Uterus (tissue), 4 donors: ENCODE measurements at regions of chr19 and their contacts with region 1.

Region 1: GRCh38 chr19:6021878-6022569 is 44.1 kb upstream of the RANBP3 start:
- DNase-seq: peak; percentile 74 to 79
- H3K4me3 ChIP-seq: no peak overlapping the region
- H3K27ac ChIP-seq: peak overlapping the region; percentile 36 to 55
- H3K4me1 ChIP-seq: peaks cover 0 to 7% of the 10 kb centered on the region in 2 donors
- H3K27me3 ChIP-seq: no peaks in the 10 kb centered on the region
- CTCF ChIP-seq: peak; percentile 57 to 79 (median 66)
- POLR2A ChIP-seq: no peak

Region 2: DNA sequence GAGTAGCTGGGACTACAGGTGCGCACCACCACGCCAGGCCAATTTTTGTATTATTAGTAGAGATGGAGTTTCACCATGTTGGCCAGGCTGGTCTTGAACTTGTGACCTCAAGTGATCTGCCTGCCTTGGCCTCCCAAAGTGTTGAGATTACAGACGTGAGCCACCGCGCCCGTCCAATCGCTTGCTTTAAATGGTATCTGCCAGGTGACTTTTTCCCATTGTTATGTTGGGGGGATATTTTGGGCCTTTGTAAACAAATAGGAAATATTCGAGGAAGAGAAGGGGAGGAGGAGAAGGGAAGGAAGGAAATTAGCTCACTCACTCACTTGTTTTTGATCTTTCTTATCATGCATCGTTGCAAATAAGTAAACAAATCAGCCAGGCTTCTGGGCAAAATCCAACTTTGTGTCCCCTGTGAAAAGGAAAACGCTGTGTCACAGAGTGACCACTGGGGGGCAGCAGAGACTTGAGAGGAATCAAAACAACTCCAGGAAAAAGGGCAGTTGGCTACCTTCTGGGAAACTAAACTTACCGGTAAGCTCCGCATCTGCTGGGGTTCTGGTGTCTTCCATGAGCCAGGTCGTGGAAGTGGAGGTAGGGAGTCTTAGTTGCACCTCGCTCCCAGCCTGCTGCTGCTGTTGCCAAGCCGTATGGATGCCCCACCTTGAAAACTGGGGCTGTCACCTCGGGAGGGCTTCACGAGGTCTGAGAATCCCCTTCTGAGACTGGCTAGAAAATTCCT is 34.8 kb before region 1 on chr19:
- intact Hi-C with region 1: loop called (anchors 5 kb)
- DNase-seq: peak; percentile 76 to 85
- H3K4me3 ChIP-seq: peak overlapping the region in 1 of 2 donors; percentile 17
- H3K27ac ChIP-seq: peak overlapping the region in 1 of 2 donors; percentile 33
- H3K4me1 ChIP-seq: no peaks in the 10 kb centered on the region
- H3K27me3 ChIP-seq: no peaks in the 10 kb centered on the region
- CTCF ChIP-seq: peak; percentile 90 to 95 (median 94)
- POLR2A ChIP-seq: no peak

Region 3: DNA sequence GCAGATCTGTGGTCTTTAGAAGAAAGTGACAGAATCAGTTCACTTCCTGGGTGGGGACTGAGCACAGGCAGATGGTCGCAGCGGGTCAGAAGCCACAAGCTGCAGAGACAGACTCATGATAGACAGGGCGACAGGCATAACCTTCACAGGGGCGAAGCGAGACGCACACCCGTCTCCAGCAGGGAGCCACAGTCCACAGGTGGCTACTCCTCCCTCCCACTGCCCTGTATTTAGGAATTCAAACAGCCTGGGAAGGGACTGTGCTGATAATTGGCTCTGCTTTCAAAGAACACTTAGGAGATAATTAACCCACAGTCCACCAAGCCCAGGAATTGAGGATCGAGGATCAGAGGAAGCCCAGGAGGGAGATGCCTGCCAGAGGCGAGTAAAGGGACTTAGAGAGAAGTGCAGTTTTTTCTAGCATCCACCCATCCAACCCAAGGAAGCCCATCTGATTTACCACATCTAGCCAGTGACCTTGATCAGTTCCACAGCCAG is 65.1 kb after region 1 on chr19:
- intact Hi-C with region 1: no loop called
- DNase-seq: no peak
- H3K4me3 ChIP-seq: no peak overlapping the region
- H3K27ac ChIP-seq: peak overlapping the region; percentile 69 to 84
- H3K4me1 ChIP-seq: peaks cover 0 to 4% of the 10 kb centered on the region in 2 donors
- H3K27me3 ChIP-seq: no peaks in the 10 kb centered on the region
- CTCF ChIP-seq: no peak
- POLR2A ChIP-seq: no peak